Mammary epithelial cell (primary cell): ENCODE measurements at regions of chr9 and their contacts with region 1.

Region 1: DNA sequence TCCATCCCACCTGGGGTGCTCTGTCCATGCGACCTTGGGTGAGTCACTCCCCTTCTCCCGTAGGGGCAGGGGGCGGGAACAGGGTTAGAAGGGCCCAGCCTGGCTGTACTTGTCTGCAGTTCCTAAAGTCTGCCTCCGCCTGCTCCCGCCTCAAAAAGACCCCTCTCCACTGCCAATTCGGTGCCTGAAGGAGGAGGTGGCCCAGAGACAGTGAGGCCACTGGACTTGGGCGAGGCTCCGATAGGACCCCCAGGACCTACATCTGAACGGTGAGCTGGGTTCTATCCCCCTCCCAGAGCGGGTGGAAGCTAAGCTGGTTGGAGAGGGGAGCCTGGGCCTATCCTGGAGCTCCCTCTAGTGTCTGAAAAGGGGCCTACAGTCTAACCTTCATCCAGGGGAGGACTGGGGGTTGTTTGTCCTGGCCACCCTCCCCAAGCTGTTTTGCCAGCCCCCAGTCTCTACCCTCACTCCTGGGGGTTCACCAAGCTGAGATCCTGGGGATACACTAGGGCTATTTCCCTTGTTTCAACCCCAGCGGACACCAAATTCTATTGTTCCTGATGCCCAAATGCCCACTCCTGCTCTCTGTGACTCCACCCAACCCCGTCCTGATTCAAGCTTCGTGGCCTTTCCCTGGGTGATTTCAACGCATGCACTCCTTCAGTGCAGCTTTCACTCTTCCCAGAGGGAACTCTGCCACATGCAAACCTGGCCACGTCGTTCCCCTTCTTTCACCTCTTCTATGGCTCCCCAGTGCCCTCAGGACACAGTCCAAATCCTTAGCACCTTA is 6.1 kb upstream of the CRB2 start:
- DNase-seq: peak; percentile 34
- H3K4me3 ChIP-seq: no peak overlapping the region
- H3K27ac ChIP-seq: no peak overlapping the region
- H3K4me1 ChIP-seq: peaks cover 4% of the 10 kb centered on the region
- H3K27me3 ChIP-seq: no peaks in the 10 kb centered on the region
- CTCF ChIP-seq: peak; percentile 95 to 99

Region 2: DNA sequence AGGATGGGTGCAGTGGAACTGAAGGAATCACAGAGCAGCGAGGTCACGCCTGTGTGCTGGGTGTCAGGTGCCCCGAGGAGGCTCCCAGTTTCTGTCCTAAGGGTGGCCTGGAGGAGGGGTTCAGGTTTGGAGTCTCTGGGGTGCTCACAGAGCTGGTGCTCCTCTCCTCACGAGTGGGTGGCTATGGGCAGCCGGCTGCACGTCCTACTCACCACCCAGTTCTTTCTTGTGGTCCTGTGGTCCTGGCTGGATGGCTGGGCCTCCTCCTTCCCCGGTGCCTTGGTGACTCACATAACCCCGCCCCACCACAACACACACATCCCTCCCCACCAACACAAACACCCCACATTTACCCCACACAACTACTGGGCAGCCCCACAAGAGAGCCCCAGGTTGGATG is 989.0 kb before region 1 on chr9:
- CTCF ChIA-PET with region 1: no interaction called
- dilution Hi-C with region 1: no loop called
- in situ Hi-C with region 1: no loop called
- intact Hi-C with region 1: loop called (anchors 10 kb)
- DNase-seq: peak; percentile 42
- H3K4me3 ChIP-seq: no peak overlapping the region
- H3K27ac ChIP-seq: no peak overlapping the region
- H3K4me1 ChIP-seq: peaks cover 27% of the 10 kb centered on the region
- H3K27me3 ChIP-seq: no peaks in the 10 kb centered on the region
- CTCF ChIP-seq: no peak

Region 3: GRCh38 chr9:122827761-122828093 is 522.2 kb before region 1 on chr9:
- CTCF ChIA-PET with region 1: no interaction called
- dilution Hi-C with region 1: no loop called
- in situ Hi-C with region 1: no loop called
- intact Hi-C with region 1: loop called (anchors 10 kb)
- DNase-seq: no peak
- H3K4me3 ChIP-seq: peak overlapping the region; percentile 77 to 97 (median 79)
- H3K27ac ChIP-seq: peak overlapping the region; percentile 57
- H3K4me1 ChIP-seq: peaks cover 9% of the 10 kb centered on the region
- H3K27me3 ChIP-seq: no peaks in the 10 kb centered on the region
- CTCF ChIP-seq: no peak

Region 4: GRCh38 chr9:122991370-122991830 is 358.5 kb before region 1 on chr9:
- CTCF ChIA-PET with region 1: interaction called, 11 read pairs
- dilution Hi-C with region 1: no loop called
- in situ Hi-C with region 1: no loop called
- intact Hi-C with region 1: loop called (anchors 1 kb)
- DNase-seq: peak; percentile 89
- H3K4me3 ChIP-seq: no peak overlapping the region
- H3K27ac ChIP-seq: peak overlapping the region; percentile 34
- H3K4me1 ChIP-seq: peaks cover 6% of the 10 kb centered on the region
- H3K27me3 ChIP-seq: no peaks in the 10 kb centered on the region
- CTCF ChIP-seq: peak; percentile 66 to 72

Region 5: DNA sequence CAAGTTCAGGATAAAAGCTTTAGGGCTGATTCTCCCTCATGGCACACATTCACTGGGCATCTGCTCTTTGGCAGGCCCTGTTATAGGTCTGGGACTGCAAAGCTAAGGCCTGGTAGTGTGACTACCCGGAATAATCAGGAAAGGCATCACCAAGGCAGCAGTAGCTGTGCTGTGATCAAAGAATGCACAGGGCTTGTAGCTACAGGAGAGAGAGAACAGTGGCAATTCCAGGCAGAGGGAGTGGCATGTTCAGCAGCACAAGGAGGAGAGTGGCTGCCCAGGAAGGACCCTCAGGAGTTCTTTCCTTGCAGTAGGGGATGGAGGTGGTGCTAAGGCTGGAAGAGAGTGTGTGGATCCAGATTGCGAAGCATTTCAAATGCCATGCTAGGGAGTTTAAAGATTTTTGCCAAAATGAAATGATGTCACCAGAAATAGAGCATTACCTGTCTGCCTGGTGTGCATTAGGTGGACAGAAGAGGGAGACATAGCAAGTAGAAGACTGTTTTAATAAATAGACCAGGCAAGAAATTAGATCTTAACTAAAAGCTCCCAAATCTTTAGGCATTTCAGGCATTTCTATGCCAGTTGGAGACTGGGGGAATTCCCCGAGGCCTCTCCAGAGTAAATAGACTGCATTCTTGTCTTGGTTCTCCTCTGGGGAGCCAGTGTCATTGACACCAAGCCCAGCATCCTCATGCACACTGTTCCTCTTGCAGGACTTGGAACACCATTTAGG is 247.3 kb before region 1 on chr9:
- CTCF ChIA-PET with region 1: interaction called, 3 read pairs
- dilution Hi-C with region 1: no loop called
- in situ Hi-C with region 1: no loop called
- intact Hi-C with region 1: loop called (anchors 1 kb)
- DNase-seq: peak; percentile 58
- H3K4me3 ChIP-seq: no peak overlapping the region
- H3K27ac ChIP-seq: no peak overlapping the region
- H3K4me1 ChIP-seq: no peaks in the 10 kb centered on the region
- H3K27me3 ChIP-seq: no peaks in the 10 kb centered on the region
- CTCF ChIP-seq: peak; percentile 32 to 59

Region 6: DNA sequence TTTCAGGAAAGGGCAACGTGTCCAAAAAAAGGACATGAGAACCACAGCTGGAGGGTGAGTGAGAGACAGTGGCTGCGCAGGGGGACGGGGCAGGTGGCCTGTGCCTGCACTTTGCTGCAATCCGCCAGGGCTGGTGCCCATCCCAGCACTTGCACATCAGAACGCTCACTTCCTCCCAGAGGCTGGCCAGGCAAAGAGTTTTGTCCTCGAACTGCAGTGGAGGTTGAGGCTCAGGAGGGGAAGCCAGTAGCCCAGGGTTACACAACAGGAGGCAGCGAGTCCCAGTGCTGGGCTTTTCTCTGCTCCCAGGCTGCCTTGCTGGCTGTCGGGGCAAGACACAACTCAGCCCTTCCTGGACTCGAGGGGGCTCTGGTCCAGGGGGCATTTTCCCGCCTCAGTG is 39.2 kb after region 1 on chr9:
- CTCF ChIA-PET with region 1: no interaction called
- dilution Hi-C with region 1: no loop called
- in situ Hi-C with region 1: no loop called
- intact Hi-C with region 1: loop called (anchors 1 kb)
- DNase-seq: no peak
- H3K4me3 ChIP-seq: no peak overlapping the region
- H3K27ac ChIP-seq: no peak overlapping the region
- H3K4me1 ChIP-seq: no peaks in the 10 kb centered on the region
- H3K27me3 ChIP-seq: no peaks in the 10 kb centered on the region
- CTCF ChIP-seq: no peak